ENCODE measurements at regions of chr16 and their contacts with region 1.

Region 1: DNA sequence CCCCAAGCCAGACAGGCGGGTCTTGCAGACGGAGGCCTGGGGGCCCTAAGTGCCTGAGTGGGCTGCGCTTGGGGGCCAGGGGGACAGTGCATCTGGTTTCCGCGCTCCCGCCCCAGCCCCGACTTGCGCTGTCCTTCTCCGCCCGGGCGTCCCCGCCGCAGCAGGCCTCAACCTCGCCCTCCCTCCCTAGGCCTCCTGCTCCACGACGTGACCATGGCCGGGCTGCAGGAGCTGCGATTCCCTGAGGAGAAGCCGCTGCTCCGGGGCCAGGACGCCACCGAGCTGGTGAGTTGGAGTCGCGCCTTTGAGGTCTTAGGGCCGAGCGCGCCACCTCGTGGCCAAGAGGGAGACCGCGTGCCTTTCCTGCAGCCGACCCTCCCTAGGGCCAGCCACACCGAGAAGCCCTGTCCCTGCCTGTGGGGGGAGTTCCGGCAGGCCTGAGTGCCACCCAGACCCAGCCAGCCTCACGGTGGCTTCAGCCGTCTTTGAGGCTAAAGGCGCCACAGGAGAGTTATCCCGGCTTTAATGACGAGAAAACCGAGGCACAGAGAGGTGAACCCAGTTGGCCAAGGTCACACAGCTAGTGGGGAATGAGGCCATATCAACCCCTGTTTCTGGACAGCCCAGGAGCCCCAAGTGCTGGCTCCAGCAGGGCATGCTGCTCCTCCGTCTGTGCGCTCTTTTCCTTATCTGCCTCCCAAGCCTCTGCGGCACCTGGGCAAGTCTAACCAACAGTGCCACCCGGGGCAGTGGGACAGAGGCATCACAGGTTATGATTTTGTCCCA is 12.2 kb upstream of the NDRG4 start:
- DNase-seq: peak; percentile 78
- H3K4me3 Mint-ChIP-seq: no peak overlapping the region
- H3K27ac Mint-ChIP-seq: no peak overlapping the region
- H3K4me1 Mint-ChIP-seq: no peaks in the 10 kb centered on the region
- H3K27me3 Mint-ChIP-seq: peaks cover 2% of the 10 kb centered on the region

Region 2: GRCh38 chr16:58299757-58300349 is 187.9 kb before region 1 on chr16:
- CTCF ChIA-PET with region 1: interaction called, 13 read pairs
- POLR2A ChIA-PET with region 1: no interaction called
- intact Hi-C with region 1: no loop called
- DNase-seq: peak; percentile 42
- H3K4me3 Mint-ChIP-seq: no peak overlapping the region
- H3K27ac Mint-ChIP-seq: no peak overlapping the region
- H3K4me1 Mint-ChIP-seq: no peaks in the 10 kb centered on the region
- H3K27me3 Mint-ChIP-seq: peaks cover 8% of the 10 kb centered on the region

Region 3: DNA sequence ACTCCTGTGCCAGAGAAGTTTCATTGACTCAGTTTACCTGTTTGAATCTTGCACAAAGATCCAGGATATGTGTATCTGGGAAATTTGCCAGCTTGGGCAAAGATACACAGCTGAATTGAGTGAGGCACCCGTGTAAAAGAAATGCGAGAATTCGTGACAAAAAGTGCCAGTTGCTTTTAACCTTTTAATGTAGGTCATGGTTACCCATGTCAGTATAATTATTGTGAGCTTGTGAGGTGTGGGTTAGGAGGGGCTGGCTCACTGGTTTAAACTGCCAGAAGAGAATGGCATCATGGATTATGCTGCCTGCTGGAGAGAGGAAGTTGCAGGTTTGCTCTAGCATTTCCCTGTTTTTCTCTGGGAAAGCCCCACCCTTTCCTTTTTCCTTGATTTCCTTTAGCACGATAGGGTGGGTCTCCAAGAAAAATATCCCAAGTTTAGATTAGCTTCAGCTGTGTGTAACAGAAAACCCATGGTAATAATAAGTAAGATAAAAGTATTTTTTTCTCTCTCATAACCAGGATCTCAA is 12.6 kb before region 1 on chr16:
- CTCF ChIA-PET with region 1: interaction called, 14 read pairs
- POLR2A ChIA-PET with region 1: interaction called, 5 read pairs
- intact Hi-C with region 1: no loop called
- DNase-seq: no peak
- H3K4me3 Mint-ChIP-seq: no peak overlapping the region
- H3K27ac Mint-ChIP-seq: no peak overlapping the region
- H3K4me1 Mint-ChIP-seq: no peaks in the 10 kb centered on the region
- H3K27me3 Mint-ChIP-seq: peaks cover 5% of the 10 kb centered on the region

Region 4: GRCh38 chr16:58551496-58551895 is 63.7 kb after region 1 on chr16:
- CTCF ChIA-PET with region 1: no interaction called
- POLR2A ChIA-PET with region 1: no interaction called
- intact Hi-C with region 1: no loop called
- DNase-seq: no peak
- H3K4me3 Mint-ChIP-seq: no peak overlapping the region
- H3K27ac Mint-ChIP-seq: peak overlapping the region; percentile 13
- H3K4me1 Mint-ChIP-seq: no peaks in the 10 kb centered on the region
- H3K27me3 Mint-ChIP-seq: no peaks in the 10 kb centered on the region